Posterior cingulate gyrus (tissue), 11 donors: ENCODE measurements at regions of chr15 and their contacts with region 1.

Region 1: GRCh38 chr15:65384895-65385858 is 7.4 kb upstream of the IGDCC3 start:
- DNase-seq: peak; percentile 79 to 98 (median 90)

Region 2: DNA sequence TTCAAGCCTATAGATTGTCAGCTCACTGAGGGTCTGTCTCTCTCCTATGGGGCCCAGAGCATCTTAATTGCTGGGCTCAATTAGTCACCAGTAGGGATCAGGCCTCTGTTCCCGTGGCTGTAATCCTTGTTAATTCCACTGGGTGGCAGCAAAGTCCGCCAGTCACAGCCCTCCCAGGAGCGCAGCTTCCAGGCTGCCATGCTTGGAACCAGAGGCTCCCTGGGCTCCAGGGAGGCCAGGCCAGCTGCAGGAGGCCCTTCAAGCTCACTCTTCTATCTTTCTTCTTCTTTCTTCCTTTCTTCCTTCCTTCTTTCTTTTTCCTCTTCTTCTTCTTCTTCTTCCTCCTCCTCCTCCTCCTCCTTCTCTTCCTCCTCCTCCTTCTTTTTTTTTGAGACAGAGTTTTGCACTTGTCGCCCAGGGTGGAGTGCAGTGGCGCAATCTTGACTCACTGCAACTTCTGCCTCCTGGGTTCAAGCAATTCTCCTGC is 66.3 kb before region 1 on chr15:
- intact Hi-C with region 1: loop called (anchors 1 kb)
- DNase-seq: peak; percentile 63 to 97 (median 86)

Region 3: DNA sequence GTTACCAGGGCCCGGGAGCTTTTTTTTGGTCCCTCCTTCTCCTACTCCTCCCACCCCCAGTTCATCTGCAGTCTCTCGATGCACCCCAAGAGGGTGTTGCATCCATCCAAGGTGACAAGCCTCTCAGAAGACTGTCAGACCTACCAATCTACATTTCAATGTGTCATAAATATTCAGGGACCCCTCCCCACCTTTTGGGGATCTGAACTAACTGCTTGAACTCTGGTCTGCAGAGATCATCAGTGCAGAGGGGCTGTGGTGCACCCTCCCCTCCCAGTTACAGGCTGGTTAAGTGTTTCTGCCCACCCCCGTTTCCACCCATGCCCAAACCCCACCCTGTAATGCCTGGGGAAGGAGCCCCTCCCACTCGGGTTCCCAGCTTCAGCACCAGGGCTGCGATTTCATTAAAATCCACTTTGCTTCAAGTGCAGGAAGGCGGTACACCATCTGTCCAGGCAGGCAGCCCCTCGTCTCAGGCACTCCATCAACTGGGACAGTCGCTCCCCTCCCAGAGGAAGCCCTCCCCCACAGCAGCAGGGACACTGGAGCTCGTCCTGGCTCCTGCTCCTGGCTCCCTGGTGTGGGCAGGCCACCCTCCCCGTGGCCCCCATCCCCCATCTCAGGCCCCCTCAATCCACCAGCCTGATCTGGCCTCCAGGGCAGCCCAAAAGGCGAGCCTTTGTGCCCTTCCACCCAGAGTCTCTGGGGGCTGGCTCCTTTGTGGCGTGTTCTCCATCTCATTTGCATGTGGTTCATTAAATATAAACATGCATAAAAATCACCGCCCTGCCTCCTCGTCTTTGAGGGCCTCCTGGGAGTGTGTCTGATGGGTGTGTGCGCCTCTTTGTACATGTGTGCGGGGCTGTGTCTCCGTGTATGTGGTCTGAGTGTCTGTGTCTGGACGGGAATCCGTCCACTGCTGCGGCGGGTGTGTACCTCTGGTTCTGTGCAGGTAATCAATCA is 48.4 kb before region 1 on chr15:
- intact Hi-C with region 1: no loop called
- DNase-seq: peak in 3 of 10 donors; percentile 28 to 61 (median 36)